ENCODE measurements at regions of chr10 and their contacts with region 1.

Region 1: DNA sequence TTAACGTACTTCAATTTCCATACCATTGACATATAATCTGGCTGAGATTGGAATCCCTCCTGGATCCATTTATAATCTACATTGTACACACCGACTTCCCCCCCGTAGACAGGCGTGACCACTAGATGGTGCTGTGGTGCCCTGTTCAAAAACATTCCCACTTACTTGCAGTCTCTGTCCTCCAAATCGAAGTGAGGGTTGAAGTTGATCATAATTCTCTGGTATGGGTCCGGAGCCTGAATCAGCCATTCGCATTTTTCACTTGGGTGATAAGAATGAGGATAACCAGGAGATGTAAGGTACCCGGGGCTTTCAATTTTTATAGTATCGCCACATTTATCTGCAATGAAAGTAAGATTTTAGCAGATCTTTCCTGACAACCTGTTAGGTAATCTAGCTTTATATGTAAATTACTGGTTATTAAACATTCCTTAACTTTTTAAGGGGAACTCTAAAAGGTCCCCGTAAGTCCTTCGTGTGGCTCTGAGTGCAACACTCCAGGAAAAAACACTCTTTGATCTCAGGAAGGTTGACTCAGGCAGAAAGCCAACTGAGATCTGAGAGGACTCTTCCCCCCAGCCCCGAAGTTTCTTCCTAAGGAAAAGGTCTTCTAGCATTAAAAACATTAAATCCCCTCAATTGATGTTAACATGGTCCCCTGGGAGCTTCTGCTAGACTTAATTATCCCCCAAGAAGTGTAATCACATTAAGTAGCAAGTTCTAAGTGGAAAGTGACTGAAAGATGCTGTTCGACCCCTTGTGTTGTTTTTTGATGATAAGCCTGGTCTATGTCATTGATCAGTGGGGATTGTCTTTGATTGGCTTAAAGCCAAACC is 3.7 kb downstream of the NRP1 start:
- DNase-seq: peak; percentile 85 to 94 (median 88)
- H3K4me3 ChIP-seq: peak overlapping the region; percentile 69
- H3K27ac ChIP-seq: peak overlapping the region in 1 of 2 donors; percentile 40
- H3K4me1 ChIP-seq: no peaks in the 10 kb centered on the region
- H3K27me3 ChIP-seq: no peaks in the 10 kb centered on the region
- CTCF ChIP-seq: peak; percentile 78 to 85 (median 80)
- EP300 ChIP-seq: no peak
- POLR2A ChIP-seq: no peak

Region 2: DNA sequence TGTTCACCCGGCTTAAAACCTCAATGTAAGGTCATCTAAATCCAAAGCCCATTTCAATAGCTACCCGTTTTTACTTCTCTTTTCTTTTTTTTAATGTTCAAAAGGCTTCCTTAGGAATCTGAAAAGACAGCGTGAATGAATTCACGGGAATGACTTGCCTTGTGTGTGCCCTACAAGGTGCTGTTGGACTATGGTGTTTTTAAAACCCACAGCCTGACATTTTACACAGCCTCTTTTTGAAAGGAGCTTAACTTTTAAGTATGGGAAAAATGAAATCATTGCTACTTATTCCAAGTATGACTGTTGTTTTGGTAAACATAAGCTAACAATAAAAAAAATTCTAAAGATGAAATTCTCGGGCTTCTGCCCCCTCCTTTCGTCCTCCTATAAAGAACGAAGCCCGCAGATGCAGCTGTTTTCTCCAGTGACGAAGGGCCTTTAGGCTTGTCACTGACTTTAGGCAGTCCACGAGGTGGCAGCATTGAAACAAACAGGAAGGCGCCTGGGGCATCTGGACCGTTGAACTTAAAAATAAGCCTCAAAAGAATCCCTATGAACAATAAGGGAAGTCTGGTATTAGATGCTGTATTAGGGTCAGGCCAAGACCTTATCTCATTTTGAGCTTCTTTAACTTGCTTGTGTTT is 137.6 kb before region 1 on chr10:
- intact Hi-C with region 1: loop called in 2 of 4 experiments (anchors 5 kb)
- DNase-seq: peak; percentile 77 to 90 (median 85)
- H3K4me3 ChIP-seq: no peak overlapping the region
- H3K27ac ChIP-seq: peak overlapping the region in 1 of 2 donors; percentile 58
- H3K4me1 ChIP-seq: peaks cover 10% of the 10 kb centered on the region
- H3K27me3 ChIP-seq: no peaks in the 10 kb centered on the region
- CTCF ChIP-seq: peak; percentile 60 to 74 (median 72)
- EP300 ChIP-seq: no peak
- POLR2A ChIP-seq: no peak

Region 3: DNA sequence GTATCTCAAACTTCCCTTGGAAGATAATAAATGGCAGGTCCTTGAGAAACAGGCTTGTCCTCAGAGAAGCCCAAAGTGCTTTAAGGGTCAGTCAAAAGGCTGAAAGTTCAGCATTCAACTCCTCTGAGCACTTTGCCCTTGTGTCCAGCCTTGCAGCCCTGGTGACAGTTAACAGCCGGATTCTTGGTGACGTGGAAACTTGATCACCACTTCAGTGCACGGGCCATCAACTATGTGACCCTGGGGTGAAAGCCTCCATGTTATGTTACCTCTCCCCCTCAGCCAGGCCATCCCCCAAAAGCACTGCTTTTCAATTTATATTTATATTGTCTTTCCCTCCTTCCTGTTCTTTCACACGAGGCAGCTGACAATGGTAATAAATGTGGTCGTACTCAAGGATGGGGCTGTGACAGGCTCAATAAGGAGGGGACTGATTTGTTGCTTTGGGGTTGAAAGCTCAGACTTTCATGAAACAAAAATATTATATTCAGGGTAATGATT is 167.7 kb after region 1 on chr10:
- intact Hi-C with region 1: no loop called
- DNase-seq: no peak
- H3K4me3 ChIP-seq: no peak overlapping the region
- H3K27ac ChIP-seq: no peak overlapping the region
- H3K4me1 ChIP-seq: peaks cover 2% of the 10 kb centered on the region
- H3K27me3 ChIP-seq: no peaks in the 10 kb centered on the region
- CTCF ChIP-seq: no peak
- EP300 ChIP-seq: no peak
- POLR2A ChIP-seq: no peak

Region 4: DNA sequence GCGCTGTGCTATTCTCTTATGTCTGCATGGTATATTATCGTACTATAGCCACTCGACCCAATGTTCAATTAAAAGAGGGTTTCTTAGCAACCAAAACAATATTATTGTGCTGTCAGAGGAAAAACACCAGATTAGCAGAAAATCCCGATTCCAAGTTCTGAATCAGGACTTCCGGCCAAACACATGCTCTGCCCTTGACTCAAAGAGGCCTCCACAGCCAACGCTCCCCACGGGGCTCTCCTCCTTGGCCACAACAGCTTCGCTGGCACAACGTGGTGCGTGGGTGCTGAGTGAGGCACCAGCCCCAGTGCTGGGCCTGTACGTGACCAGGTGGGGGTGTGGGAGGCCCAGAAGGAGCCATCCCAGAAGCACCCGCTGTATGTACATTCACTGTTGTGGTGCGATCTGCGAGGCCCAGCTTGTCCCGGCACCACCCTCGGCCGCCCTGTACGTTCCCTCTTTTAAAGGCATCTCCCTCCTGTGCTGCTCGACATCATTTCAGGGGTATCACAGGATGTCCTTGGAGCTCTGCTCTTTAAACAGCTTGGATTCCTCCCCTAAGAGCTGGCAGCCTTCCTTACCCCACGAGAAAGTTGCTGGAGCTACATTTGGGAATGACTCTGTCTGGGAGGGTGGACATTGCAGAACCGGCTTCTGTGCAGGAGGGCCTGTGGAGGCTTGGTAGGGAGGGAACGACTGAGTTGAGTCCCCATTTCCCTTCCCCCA is 748.1 kb after region 1 on chr10:
- intact Hi-C with region 1: loop called in 1 of 4 experiments (anchors 10 kb)
- DNase-seq: peak; percentile 81 to 88 (median 84)
- H3K4me3 ChIP-seq: no peak overlapping the region
- H3K27ac ChIP-seq: peak overlapping the region; percentile 20 to 82
- H3K4me1 ChIP-seq: peaks cover 30% of the 10 kb centered on the region
- H3K27me3 ChIP-seq: no peaks in the 10 kb centered on the region
- CTCF ChIP-seq: peak in 1 of 3 donors; percentile 10
- EP300 ChIP-seq: no peak
- POLR2A ChIP-seq: no peak

Region 5: DNA sequence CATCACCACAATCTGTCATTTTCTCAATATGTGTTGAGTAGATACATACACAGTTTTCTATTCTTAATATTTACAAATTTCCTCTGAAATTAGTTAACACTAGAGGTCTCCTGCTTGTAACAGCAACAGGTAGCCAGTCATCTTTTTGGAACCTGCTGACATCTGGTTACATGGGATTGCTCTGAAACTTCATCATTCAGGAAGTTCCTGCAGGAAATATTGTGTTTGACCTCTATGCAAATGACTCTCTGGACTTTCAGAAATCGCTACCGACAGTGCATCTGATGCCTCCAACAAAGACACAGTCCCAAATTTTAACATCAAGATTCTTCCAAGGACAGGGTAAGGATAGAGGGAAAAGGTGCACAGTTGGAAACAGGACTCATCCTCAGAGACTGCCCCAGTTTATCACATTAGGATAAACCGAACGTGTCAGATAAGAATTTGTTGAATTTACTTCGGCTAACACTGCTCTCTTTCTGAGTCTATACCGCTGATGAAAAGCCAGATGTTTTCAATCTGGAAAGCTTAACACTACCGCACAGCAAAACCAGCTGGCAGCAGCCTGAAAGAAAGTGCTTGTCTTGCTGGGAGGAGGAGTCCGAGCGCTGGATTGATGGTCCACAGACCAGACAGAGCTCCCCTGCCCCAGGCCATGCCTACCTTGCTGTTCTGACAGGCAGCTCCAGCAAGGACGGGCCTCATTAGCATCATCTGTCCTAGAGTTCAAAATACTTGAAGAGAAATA is 851.0 kb after region 1 on chr10:
- intact Hi-C with region 1: loop called in 1 of 4 experiments (anchors 10 kb)
- DNase-seq: peak in 3 of 5 donors; percentile 29 to 51 (median 44)
- H3K4me3 ChIP-seq: no peak overlapping the region
- H3K27ac ChIP-seq: no peak overlapping the region
- H3K4me1 ChIP-seq: peaks cover 24% of the 10 kb centered on the region
- H3K27me3 ChIP-seq: no peaks in the 10 kb centered on the region
- CTCF ChIP-seq: no peak
- EP300 ChIP-seq: no peak
- POLR2A ChIP-seq: no peak

Region 6: GRCh38 chr10:34637418-34637911 is 1306.7 kb after region 1 on chr10:
- intact Hi-C with region 1: loop called in 3 of 4 experiments (anchors 2 to 5 kb)
- DNase-seq: peak; percentile 55 to 82 (median 74)
- H3K4me3 ChIP-seq: no peak overlapping the region
- H3K27ac ChIP-seq: no peak overlapping the region
- H3K4me1 ChIP-seq: peaks cover 2% of the 10 kb centered on the region
- H3K27me3 ChIP-seq: no peaks in the 10 kb centered on the region
- CTCF ChIP-seq: peak; percentile 68 to 86 (median 84)
- EP300 ChIP-seq: no peak
- POLR2A ChIP-seq: no peak

Measured in ovary (tissue), 10 donors.